Common myeloid progenitor, CD34-positive (primary cell): ENCODE measurements at regions of chr22 and their contacts with region 1.

Region 1: DNA sequence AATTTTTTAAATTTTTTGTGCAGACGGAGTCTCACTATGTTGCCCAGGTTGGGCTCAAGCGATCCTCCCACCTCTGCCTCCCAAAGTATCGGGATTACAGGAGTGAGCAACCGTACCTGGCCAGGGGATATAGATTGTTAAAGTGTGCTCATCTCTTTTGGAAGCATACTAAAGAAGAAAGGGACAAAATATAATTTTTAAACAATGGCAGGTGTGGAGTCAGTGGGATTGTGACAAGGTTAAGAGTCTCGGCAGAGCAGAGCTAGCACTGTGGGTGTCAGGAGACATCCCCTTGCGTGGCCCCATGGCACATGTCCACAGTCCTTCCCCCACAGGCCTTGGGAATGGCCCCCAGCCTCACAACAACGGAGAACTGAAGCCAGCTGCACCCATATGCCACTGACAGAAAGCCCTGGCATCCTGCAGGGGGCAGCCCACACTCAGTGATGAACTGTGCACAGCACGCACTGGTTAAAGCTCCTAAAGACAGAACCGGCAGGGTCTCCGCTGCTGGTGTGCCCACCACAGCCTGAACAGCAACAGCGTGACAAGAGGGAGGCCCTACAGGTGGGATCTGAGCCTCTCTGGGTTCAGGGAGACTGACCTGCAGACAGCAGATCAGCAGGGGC is 29.9 kb downstream of the SERPIND1 start:
- DNase-seq: peak; percentile 54 to 76 (median 70)
- H3K4me3 ChIP-seq: no peak overlapping the region
- H3K27ac ChIP-seq: no peak overlapping the region
- H3K4me1 ChIP-seq: no peaks in the 10 kb centered on the region
- H3K27me3 ChIP-seq: no peaks in the 10 kb centered on the region

Region 2: GRCh38 chr22:20725987-20726558 is 77.7 kb before region 1 on chr22:
- CTCF ChIA-PET with region 1: no interaction called
- POLR2A ChIA-PET with region 1: no interaction called
- DNase-seq: no peak
- H3K4me3 ChIP-seq: no peak overlapping the region
- H3K27ac ChIP-seq: no peak overlapping the region
- H3K4me1 ChIP-seq: peaks cover 0 to 4% (median 0%) of the 10 kb centered on the region in 4 experiments
- H3K27me3 ChIP-seq: no peaks in the 10 kb centered on the region

Region 3: DNA sequence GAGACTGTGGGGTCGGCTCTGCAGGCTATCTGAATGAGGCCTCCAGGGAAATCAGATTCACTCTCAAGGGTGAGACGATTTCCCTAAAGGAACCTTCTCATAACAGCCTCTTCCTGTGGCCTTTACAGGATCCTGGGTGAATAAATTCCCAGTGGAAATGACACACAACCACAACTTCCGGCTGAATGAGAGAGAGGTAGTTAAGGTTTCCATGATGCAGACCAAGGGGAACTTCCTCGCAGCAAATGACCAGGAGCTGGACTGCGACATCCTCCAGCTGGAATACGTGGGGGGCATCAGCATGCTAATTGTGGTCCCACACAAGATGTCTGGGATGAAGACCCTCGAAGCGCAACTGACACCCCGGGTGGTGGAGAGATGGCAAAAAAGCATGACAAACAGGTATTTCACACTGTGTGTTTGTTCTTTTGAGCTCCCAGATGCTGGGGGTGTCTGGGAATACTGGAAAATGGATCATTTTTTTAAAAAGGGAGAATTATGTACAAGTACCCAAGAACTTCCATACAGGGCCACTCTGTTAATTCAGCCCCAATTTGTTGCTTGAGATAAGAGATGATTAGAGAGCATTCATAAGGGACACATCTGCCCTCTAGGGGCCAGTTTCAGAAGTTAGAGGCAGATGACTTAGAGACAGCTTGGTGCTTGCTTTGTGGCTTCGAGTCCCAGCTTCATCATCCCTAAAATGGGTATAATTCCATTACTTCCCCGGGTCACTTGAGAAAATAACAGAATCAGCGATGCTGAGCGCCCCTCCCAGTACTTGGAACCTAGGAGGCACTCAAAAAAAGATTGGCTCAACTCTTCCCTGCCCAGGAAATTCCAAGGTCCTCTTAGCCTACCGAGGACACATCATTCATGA is 19.7 kb before region 1 on chr22:
- CTCF ChIA-PET with region 1: interaction called, 12 read pairs
- POLR2A ChIA-PET with region 1: no interaction called
- DNase-seq: peak; percentile 59 to 75 (median 74)
- H3K4me3 ChIP-seq: no peak overlapping the region
- H3K27ac ChIP-seq: peak overlapping the region in 1 of 2 experiments; percentile 9
- H3K4me1 ChIP-seq: peaks cover 0 to 6% (median 2%) of the 10 kb centered on the region in 4 experiments
- H3K27me3 ChIP-seq: no peaks in the 10 kb centered on the region

Region 4: GRCh38 chr22:20792947-20793294 is 10.9 kb before region 1 on chr22:
- CTCF ChIA-PET with region 1: interaction called, 16 read pairs
- POLR2A ChIA-PET with region 1: no interaction called
- DNase-seq: no peak
- H3K4me3 ChIP-seq: no peak overlapping the region
- H3K27ac ChIP-seq: no peak overlapping the region
- H3K4me1 ChIP-seq: peaks cover 0 to 31% (median 12%) of the 10 kb centered on the region in 4 experiments
- H3K27me3 ChIP-seq: no peaks in the 10 kb centered on the region

Region 5: GRCh38 chr22:20852076-20852475 is 48.3 kb after region 1 on chr22:
- CTCF ChIA-PET with region 1: interaction called, 29 read pairs
- POLR2A ChIA-PET with region 1: interaction called, 3 read pairs
- DNase-seq: peak; percentile 47 to 64 (median 48)
- H3K4me3 ChIP-seq: no peak overlapping the region
- H3K27ac ChIP-seq: peak overlapping the region in 1 of 2 experiments; percentile 2
- H3K4me1 ChIP-seq: peaks cover 2 to 21% (median 14%) of the 10 kb centered on the region in 4 experiments
- H3K27me3 ChIP-seq: no peaks in the 10 kb centered on the region

Region 6: DNA sequence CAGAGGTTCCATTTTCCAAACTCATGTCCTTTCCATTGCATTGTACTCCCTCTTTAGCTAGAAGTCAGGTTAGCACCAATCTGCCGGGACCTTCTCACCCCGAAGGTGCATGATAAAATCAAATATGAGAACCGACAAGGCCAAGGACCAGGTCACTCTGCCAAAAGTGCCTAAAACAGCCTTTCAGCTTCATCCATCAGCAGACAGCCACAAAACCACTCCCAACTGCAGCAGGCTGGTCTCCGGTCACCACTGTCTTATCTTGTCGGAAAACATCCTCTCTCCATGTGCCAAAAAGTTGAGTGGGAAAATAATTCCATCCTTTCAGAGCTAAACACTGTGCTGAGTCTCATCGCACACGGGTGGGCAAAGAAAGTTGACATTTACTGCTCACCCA is 53.4 kb after region 1 on chr22:
- CTCF ChIA-PET with region 1: interaction called, 29 read pairs
- POLR2A ChIA-PET with region 1: interaction called, 4 read pairs
- DNase-seq: no peak
- H3K4me3 ChIP-seq: peak overlapping the region in 6 of 7 experiments; percentile 78 to 90 (median 86)
- H3K27ac ChIP-seq: peak overlapping the region in 1 of 2 experiments; percentile 76
- H3K4me1 ChIP-seq: peaks cover 8 to 50% (median 33%) of the 10 kb centered on the region in 4 experiments
- H3K27me3 ChIP-seq: no peaks in the 10 kb centered on the region

Region 7: DNA sequence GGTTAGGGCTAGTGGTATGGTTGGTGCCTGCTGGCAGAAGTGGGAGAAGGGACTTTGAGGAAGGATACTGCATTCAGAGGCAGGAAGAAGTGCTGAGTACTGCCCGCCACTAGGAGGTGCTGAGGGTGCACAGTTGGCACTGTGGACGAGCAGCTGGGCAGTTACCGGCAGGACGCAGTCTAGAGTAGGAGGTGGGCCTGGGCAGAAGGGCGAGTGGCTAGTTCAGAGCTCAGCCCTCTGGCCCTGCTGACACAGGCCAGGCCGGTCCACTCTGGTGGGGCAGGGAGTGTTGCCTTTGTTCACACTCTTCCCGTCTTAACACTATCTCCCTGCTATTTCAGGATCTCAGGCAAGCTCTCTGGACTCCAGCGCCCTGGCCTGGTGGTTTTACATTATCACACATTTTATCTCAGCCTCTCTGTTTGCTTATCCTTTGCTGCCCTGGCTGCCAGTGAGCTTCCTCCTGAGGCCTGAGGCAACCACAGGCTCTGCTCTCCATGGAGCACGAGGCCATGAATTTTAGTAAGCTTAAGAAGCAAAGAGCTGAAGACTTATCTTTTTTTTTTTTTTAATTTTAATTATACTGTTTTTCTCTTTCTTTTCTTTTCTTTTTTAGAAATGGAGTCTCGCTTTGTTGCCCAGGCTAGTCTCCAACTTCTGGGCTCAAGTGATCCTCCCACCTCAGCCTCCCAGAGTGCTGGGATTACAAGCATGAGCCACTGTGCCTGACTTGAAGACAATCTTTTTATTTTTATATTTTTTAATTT is 81.9 kb after region 1 on chr22:
- CTCF ChIA-PET with region 1: interaction called, 28 read pairs
- POLR2A ChIA-PET with region 1: interaction called, 6 read pairs
- DNase-seq: peak; percentile 81 to 88 (median 86)
- H3K4me3 ChIP-seq: peak overlapping the region in 4 of 7 experiments; percentile 19 to 69 (median 62)
- H3K27ac ChIP-seq: peak overlapping the region in 1 of 2 experiments; percentile 73
- H3K4me1 ChIP-seq: peaks cover 0 to 12% (median 10%) of the 10 kb centered on the region in 4 experiments
- H3K27me3 ChIP-seq: no peaks in the 10 kb centered on the region